HEK293T (cell line): ENCODE measurements at regions of chr1 and their contacts with region 1.

Region 1: DNA sequence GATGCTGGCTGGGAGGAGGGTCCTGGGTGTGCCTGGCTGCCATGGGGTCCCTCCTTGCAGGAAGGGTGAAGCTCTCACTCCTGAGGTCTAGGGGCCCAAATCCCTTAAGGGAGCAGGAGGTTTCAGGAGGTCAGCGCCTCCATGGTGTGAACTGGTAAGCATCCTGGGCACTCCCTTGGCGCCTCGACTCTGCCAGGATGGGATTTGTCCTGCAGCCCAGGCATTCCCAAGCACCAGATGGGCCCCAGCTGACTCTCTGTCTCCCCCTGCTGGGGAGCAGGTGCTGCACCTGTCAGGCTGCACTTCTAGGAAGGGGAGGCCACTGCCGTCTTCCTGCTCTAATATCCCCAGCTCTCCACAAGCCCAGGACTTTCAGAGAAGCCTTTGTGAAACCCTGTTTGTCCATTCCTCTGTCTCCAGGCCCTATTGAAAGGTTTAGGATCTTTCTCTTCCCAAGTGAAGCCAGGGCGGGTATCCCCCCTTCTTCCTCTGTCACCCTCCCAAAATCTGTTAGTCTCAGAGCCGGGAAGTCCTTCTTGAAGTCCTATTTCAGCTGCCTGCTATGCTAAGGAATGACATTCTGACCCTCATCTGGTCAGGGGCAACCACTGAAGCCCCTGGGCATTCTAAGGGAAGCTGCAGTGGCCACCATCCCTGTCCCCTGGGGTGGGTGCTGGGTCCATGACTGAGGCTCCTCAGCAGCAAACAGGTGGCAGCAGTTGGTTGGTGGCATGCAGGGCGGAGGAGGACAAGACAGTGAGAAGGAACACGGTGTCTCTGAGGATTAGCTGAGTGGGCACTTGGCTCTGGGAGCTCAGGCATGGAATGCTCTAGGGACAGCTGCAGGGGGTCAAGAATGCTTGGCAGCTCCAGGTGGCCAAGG is 3.3 kb downstream of the MYBPH start:
- DNase-seq: peak; percentile 91

Region 2: DNA sequence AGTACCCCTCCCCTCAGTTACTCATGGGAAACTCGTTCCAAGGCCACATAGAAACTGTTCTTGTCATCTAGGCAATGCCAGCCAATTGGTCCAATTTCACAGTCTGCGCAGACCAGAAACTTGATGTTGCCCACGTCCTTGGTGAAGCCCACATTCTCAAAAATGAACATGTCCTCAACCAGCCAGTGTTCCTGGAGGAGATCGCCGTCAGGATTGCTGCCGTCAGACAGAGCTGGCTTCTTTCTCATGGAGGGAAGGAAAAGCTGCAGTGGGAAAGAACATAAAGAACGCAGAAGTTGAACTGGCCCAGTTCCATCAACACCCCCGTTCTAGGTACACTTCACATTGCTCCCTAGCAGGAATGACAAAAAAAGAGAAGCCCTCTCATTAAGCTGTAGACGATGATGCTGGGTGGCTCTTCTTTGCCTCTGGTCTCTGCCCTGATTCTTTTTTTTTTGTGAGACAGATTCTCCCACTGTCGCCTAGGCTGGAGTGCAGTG is 291.4 kb before region 1 on chr1:
- CTCF ChIA-PET with region 1: no interaction called
- POLR2A ChIA-PET with region 1: no interaction called
- DNase-seq: no peak

Region 3: GRCh38 chr1:203084588-203085502 is 87.5 kb before region 1 on chr1:
- CTCF ChIA-PET with region 1: interaction called, 15 read pairs
- POLR2A ChIA-PET with region 1: no interaction called
- DNase-seq: peak; percentile 74

Region 4: DNA sequence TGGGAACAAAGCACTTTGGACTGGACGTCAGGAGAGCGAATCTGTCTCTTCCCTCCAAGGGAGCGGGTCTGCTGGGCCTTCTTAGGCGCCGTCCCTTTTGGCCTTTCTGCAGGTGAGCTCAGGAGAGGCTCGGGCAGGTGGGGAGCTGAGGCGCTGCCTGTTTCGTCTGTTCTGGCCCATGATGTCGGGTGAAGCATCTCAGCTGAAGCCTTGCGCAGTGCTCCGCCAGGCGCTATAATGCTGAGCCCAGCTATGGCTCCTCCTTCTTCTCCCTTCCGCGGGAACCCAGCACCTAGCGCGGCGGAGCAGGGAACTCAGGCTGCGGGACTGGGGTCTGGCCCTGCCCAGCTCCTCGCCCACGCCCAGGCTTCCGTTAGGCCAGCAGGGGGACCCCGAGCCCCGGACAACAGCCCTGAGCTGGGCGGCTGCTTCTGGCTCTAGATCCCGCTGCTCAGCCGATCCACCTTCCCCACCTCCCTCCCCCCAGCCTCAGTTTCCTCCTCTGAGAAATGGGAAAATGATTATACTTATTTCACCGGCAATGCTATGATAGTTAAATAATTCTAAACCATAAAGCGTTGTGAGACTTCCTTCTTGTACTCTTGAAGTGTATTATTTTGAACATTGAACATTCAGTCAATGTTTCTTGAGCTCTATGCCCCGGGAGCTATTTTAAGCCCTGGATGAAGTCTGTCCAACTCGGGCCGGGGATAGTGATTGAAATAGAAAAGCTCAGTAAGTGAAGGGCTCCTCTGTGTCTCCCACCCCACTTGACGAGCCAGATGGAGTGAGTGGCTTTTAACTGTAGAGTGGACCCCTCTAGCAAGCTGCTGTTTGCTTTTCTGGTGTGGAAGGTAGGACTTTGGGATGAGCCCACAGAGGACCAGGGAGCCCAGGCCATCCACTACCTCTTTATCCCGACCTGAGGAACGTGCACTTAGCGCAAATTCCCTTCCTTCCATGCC is 54.5 kb before region 1 on chr1:
- CTCF ChIA-PET with region 1: interaction called, 49 read pairs
- POLR2A ChIA-PET with region 1: no interaction called
- DNase-seq: peak; percentile 96

Region 5: DNA sequence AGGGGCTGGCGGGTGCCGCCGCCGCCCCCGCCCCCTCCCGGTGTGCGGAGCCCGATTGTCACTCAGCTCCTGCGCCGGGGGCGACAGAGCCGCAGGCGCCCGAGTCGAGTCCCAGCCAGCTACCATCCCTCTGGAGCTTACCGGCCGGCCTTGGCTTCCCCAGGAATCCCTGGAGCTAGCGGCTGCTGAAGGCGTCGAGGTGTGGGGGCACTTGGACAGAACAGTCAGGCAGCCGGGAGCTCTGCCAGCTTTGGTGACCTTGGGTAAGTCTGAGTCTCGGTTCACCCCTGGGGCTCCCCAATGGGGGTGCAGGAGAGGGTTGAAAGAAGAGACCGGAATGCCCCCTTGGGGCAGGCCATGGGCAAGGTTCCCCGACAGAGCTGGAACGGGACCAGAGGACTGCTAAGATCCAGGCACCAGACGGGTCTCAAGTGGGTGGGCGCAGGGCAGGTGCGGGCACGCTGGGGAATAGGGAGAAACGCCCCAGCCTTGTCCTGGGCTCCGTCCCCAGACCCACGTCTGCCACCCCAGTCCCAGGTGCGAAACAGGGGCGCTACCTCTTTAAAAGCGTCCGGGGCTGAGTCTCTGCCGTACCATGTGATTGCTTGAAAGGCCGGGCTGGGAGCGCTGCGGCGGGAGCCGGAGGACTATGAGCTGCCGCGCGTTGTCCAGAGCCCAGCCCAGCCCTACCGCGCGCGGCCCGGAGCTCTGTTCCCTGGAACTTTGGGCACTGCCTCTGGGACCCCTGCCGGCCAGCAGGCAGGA is 44.5 kb before region 1 on chr1 and contains the start of gene ADORA1:
- CTCF ChIA-PET with region 1: interaction called, 17 read pairs
- POLR2A ChIA-PET with region 1: interaction called, 3 read pairs
- DNase-seq: peak; percentile 76

Region 6: DNA sequence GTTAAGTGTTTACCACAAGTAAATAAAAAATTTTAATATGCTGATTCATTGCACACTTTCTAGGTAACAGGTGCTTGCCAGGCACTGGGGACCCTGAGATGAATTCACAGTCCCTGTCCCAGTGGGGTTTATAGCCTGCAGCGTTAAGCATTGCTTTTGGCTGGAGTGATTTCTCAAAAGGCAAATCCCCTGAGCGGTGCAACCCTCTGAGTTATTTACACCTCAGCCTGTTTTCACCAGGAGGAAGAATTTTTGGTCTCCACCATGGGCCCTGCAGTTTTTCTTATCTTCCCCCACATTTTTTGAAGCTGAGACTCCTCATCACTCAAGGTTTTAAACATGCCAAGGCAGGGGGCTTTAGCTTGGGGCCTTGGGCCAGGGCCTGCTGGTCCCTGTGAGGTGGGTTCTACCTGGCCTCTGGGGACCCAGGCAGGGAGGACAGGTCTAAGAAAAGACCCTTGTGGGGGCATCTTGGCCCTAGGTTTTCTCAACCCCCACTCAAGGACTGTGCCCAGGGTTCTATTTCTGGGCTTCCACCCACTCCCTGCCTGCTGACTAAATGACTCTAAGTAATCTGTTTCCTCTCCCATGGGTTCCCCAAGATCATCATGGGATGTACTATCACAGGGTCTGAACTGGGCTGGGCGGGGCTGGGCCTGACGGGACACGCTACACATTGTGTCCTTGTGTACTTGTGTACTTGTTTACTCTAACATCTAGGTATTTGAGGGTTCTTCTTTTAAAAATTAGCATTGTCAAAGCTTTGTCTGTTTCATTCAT is 67.3 kb after region 1 on chr1:
- CTCF ChIA-PET with region 1: no interaction called
- POLR2A ChIA-PET with region 1: no interaction called
- DNase-seq: no peak

Region 7: DNA sequence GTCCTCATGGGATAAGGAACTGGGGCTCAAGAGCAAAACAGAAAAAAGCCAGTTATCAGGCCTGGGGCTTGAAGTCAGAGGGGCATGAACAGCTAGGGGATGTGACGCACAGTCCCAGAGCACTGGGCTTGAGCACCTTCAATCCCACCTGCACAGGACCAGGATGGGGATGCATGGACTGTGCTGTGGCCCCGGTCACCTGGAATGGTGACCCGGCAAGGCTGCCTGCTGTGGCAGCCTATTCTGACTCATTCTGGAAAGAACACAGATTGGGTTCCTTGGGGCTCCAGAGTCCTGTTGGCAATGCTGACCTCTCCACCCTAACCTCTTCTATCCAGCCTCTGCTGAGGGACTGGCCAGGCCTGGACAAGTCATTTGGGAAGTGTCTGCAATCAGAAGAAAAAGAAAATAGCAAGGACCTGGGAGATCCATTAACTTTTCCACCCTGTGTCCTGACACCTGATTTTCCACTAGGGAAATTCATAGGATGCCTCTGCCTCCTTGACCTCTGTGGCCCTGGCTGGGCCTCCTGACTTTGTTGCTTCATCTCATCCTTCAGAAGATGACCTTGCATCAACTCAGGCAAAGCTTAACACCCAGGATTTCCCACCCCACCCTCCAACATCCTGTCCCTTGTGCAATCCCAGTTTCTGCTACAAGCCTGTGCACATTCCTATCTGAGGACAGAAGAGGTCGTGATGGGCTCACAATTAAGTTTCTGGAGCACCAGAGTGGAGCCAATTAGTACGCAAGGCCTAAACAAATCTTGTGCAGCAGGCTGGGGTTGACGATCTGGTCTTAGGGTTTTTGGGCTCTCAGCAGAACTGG is 196.5 kb after region 1 on chr1:
- CTCF ChIA-PET with region 1: no interaction called
- POLR2A ChIA-PET with region 1: no interaction called
- DNase-seq: no peak